Mammary epithelial cell (primary cell): ENCODE measurements at regions of chr16 and their contacts with region 1.

Region 1: GRCh38 chr16:28218104-28218503 is 6.3 kb upstream of the XPO6 start:
- DNase-seq: peak; percentile 43
- H3K4me3 ChIP-seq: no peak overlapping the region
- H3K27ac ChIP-seq: no peak overlapping the region
- H3K4me1 ChIP-seq: no peaks in the 10 kb centered on the region
- H3K27me3 ChIP-seq: no peaks in the 10 kb centered on the region
- CTCF ChIP-seq: peak; percentile 46 to 66

Region 2: GRCh38 chr16:27779641-27780164 is 438.4 kb before region 1 on chr16:
- CTCF ChIA-PET with region 1: no interaction called
- dilution Hi-C with region 1: no loop called
- in situ Hi-C with region 1: no loop called
- intact Hi-C with region 1: loop called (anchors 5 kb)
- DNase-seq: peak; percentile 12
- H3K4me3 ChIP-seq: no peak overlapping the region
- H3K27ac ChIP-seq: no peak overlapping the region
- H3K4me1 ChIP-seq: no peaks in the 10 kb centered on the region
- H3K27me3 ChIP-seq: no peaks in the 10 kb centered on the region
- CTCF ChIP-seq: peak; percentile 22 to 45

Region 3: DNA sequence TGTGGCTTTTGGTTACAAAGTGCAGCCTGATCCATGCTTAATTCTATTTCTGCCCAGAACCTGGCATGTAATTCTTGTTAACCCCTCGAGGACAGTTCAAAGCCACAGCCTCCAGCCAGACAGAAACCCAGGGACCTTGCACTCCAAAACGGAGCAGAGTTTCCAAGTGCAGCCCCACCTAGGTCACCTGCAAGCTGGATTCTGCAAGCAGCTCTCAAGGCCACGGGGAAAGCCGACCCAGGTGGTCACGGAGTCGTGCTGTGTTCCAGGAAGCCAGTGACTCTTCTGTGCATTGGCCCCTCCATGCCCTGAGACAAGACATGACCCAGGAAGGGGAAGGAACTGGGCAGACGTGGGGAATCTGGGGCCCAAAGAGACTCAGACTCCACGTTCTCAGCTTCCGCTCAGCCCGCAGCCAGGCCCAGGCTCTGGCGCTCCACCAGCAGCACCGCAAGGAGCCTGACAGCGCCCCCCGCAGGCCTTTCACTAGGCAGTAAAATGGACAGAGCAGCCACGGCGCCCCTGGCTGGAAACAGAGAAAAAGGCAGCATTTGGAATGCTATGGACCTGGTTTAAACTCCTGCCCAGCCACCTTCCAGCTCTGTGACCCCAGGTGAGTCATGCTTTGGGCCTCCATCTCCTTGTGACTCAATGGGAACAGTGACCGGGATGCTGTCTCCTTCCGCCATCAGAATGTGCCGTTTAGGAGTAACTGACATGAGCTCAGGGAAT is 127.3 kb before region 1 on chr16:
- CTCF ChIA-PET with region 1: no interaction called
- dilution Hi-C with region 1: no loop called
- in situ Hi-C with region 1: no loop called
- intact Hi-C with region 1: loop called (anchors 5 kb)
- DNase-seq: no peak
- H3K4me3 ChIP-seq: no peak overlapping the region
- H3K27ac ChIP-seq: no peak overlapping the region
- H3K4me1 ChIP-seq: peaks cover 8% of the 10 kb centered on the region
- H3K27me3 ChIP-seq: no peaks in the 10 kb centered on the region
- CTCF ChIP-seq: peak in 1 of 2 donors; percentile 21

Region 4: DNA sequence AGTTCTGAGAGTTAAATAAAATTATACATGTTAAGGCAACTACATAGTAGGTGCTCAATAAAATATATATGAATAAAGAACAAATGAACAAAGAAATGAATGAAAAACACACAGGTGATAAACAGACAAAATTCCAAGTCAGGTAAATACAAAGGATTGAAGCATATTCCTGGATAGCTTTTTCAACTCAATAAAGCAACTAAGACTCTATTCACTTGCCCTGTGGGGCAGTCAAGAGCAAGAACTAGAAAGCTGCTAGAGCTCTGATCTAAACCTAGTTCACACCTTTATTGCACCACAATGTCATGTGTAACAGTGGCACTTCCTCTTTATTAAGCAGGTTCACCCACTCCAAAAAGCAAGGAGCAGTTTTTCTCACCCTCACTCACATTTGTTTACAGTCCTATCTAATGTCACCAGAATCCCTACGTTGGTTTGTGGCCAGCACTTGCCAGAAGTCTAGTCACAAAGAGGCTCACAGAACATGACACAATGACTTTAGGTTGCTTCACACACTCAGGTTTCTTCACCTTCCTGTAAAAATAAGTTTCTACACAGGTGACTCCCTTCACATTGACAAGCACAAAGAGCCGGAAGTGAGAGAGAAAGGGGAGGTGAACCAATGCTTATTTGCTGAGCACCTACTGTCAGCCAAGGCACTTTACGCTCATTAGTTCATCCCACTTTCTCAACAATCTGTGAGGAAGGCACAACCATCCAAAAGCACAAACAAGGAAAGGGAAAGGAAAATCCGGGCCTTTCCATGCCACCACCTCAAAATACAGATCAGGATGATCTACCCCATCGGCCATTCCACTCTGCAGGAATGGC is 77.1 kb before region 1 on chr16:
- CTCF ChIA-PET with region 1: no interaction called
- dilution Hi-C with region 1: no loop called
- in situ Hi-C with region 1: no loop called
- intact Hi-C with region 1: loop called (anchors 5 kb)
- DNase-seq: no peak
- H3K4me3 ChIP-seq: no peak overlapping the region
- H3K27ac ChIP-seq: no peak overlapping the region
- H3K4me1 ChIP-seq: peaks cover 6% of the 10 kb centered on the region
- H3K27me3 ChIP-seq: no peaks in the 10 kb centered on the region
- CTCF ChIP-seq: no peak

Region 5: DNA sequence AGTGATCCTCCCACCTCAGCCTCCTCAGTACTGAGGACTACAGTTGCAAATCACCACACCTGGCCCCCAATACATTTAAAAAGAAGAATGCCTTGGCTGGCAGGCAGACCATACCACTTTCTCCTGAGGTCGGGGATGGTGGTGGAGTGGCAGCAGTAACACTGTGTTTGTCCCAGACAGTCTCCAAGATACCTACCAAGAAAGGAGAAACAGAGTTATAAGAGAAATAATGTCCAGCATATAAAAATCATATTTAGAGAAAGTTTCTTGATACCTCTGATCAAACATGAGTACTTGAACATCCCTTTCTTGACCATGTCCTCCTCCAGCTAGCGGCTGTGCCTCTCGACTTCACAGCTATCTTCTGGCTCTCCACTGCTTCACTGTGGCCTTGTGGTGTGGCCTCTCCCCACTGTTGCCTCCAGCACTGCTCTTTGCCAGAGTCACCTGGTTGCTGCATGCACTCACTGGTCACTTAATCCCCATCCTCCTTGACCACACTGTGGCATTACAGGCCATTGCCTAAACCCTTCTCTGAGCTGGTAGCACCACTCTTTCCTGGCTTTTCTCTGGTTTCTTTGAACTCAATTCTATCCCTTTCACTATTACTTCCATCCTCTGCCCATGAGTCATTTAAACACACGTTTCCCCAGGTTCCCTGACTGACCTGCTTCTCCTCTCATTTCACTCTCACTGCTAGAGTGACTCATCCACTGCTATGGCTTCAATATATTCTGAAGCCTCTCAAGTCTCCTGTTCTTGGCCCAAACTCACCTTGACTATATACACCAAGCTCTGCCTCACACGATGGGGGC is 51.5 kb before region 1 on chr16:
- CTCF ChIA-PET with region 1: no interaction called
- dilution Hi-C with region 1: no loop called
- in situ Hi-C with region 1: no loop called
- intact Hi-C with region 1: loop called (anchors 1 kb)
- DNase-seq: peak; percentile 85
- H3K4me3 ChIP-seq: no peak overlapping the region
- H3K27ac ChIP-seq: no peak overlapping the region
- H3K4me1 ChIP-seq: peaks cover 11% of the 10 kb centered on the region
- H3K27me3 ChIP-seq: no peaks in the 10 kb centered on the region
- CTCF ChIP-seq: no peak